ENCODE measurements at regions of chr17 and their contacts with region 1.

Region 1: GRCh38 chr17:49191917-49192741 is 18.2 kb downstream of the GNGT2 start:
- DNase-seq: peak; percentile 88 to 89 (median 89)
- H3K4me3 ChIP-seq: peak overlapping the region; percentile 31 to 80 (median 73)
- H3K4me3 Mint-ChIP-seq: peak overlapping the region; percentile 94 to 96
- H3K27ac ChIP-seq: peak overlapping the region; percentile 97 to 99
- H3K27ac Mint-ChIP-seq: peak overlapping the region; percentile 99 to 100 (median 99)
- H3K4me1 ChIP-seq: peaks cover 33 to 38% of the 10 kb centered on the region in 2 donors
- H3K4me1 Mint-ChIP-seq: peaks cover 43% of the 10 kb centered on the region
- H3K27me3 ChIP-seq: no peaks in the 10 kb centered on the region
- H3K27me3 Mint-ChIP-seq: peaks cover 0 to 7% (median 0%) of the 10 kb centered on the region in 3 donors
- CTCF ChIP-seq: no peak

Region 2: GRCh38 chr17:49132699-49133364 is 59.3 kb before region 1 on chr17 and contains the start of gene B4GALNT2:
- intact Hi-C with region 1: no loop called
- DNase-seq: no peak
- H3K4me3 ChIP-seq: no peak within 1 kb of the TSS
- H3K4me3 Mint-ChIP-seq: peak within 1 kb of the TSS; percentile 9 to 80
- H3K27ac ChIP-seq: no peak within 1 kb of the TSS
- H3K27ac Mint-ChIP-seq: no peak within 1 kb of the TSS
- H3K4me1 ChIP-seq: peaks cover 4 to 5% of the 10 kb centered on the region in 2 donors
- H3K4me1 Mint-ChIP-seq: peaks cover 9% of the 10 kb centered on the region
- H3K27me3 ChIP-seq: peaks cover 33 to 66% of the 10 kb centered on the region in 2 donors
- H3K27me3 Mint-ChIP-seq: peaks cover 66 to 74% (median 73%) of the 10 kb centered on the region in 3 donors
- CTCF ChIP-seq: no peak
- polyA plus RNA-seq, gene B4GALNT2: not detected

Region 3: DNA sequence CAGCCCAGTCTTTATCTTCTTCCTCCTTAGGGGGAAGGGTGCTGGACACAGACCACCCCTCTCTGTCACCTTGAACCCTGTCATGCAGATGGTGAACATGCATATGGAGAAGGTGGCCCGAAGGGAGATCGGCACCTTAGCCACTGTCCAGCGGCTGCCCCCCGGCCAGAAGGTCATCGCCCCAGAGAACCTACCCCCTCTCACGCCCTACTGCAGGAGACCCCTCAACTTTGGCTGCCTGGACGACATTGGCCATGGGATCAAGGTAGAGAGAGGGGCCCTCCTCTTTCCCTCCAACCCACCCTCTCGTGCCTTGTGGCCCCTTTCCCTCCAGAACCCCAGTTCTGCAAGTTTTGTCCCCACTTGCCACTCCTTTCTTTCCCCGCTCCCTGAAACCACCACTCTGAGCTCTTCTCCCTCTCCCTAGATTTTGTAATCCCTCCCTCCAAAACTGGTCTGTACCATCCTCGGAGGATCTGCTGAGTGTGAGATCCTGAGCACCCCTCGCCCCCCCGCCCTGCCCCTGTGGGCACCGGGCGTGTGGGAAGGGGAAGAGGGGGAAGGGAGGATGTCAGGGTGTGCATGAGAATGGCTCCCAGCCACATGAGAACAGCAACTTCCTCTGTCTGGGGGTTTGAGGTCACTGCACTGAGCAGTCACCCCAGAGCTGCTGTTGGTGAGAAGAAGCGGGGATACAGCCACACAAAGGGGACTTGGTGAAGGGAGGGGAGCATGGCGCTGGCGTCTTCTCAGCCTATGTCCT is 25.7 kb after region 1 on chr17:
- intact Hi-C with region 1: loop called in 1 of 2 experiments (anchors 2 kb)
- DNase-seq: peak; percentile 94 to 96 (median 94)
- H3K4me3 ChIP-seq: peak overlapping the region in 2 of 3 experiments; percentile 6 to 72
- H3K4me3 Mint-ChIP-seq: peak overlapping the region; percentile 67 to 90
- H3K27ac ChIP-seq: peak overlapping the region; percentile 97 to 99
- H3K27ac Mint-ChIP-seq: peak overlapping the region; percentile 99 to 100 (median 99)
- H3K4me1 ChIP-seq: peaks cover 82 to 91% of the 10 kb centered on the region in 2 donors
- H3K4me1 Mint-ChIP-seq: peaks cover 83% of the 10 kb centered on the region
- H3K27me3 ChIP-seq: no peaks in the 10 kb centered on the region
- H3K27me3 Mint-ChIP-seq: peaks cover 4 to 11% (median 6%) of the 10 kb centered on the region in 3 donors
- CTCF ChIP-seq: no peak

Region 4: GRCh38 chr17:49252148-49253034 is 60.3 kb after region 1 on chr17:
- intact Hi-C with region 1: loop called in 1 of 2 experiments (anchors 2 kb)
- DNase-seq: peak; percentile 90 to 96 (median 96)
- H3K4me3 ChIP-seq: no peak overlapping the region
- H3K4me3 Mint-ChIP-seq: no peak overlapping the region
- H3K27ac ChIP-seq: peak overlapping the region; percentile 41 to 90
- H3K27ac Mint-ChIP-seq: peak overlapping the region; percentile 87 to 95 (median 93)
- H3K4me1 ChIP-seq: peaks cover 29 to 35% of the 10 kb centered on the region in 2 donors
- H3K4me1 Mint-ChIP-seq: peaks cover 37% of the 10 kb centered on the region
- H3K27me3 ChIP-seq: no peaks in the 10 kb centered on the region
- H3K27me3 Mint-ChIP-seq: peaks cover 0 to 5% (median 4%) of the 10 kb centered on the region in 3 donors
- CTCF ChIP-seq: no peak

Measured in CD14-positive monocyte (primary cell).